ENCODE measurements at regions of chr12 and their contacts with region 1.

Region 1: GRCh38 chr12:79555028-79555930 is 135.5 kb downstream of the PAWR start:
- DNase-seq: no peak

Region 2: GRCh38 chr12:79659961-79660431 is 104.7 kb after region 1 on chr12:
- intact Hi-C with region 1: no loop called
- DNase-seq: no peak

Region 3: GRCh38 chr12:79737875-79738718 is 182.8 kb after region 1 on chr12:
- intact Hi-C with region 1: loop called (anchors 5 kb)
- DNase-seq: no peak

Region 4: GRCh38 chr12:80186727-80187217 is 631.5 kb after region 1 on chr12:
- intact Hi-C with region 1: loop called (anchors 5 kb)
- DNase-seq: peak in 2 of 10 donors; percentile 12 to 21

Region 5: GRCh38 chr12:80269803-80270552 is 714.7 kb after region 1 on chr12:
- intact Hi-C with region 1: loop called (anchors 2 kb)
- DNase-seq: peak in 1 of 10 donors; percentile 31

Region 6: GRCh38 chr12:80763874-80764273 is 1208.6 kb after region 1 on chr12:
- intact Hi-C with region 1: loop called (anchors 5 kb)
- DNase-seq: no peak

Measured in posterior cingulate gyrus (tissue), 11 donors.